ENCODE measurements at regions of chr7 and their contacts with region 1.

Region 1: GRCh38 chr7:31735991-31736982 is 49.3 kb downstream of the PPP1R17 start:
- DNase-seq: no peak
- H3K4me3 ChIP-seq: no peak overlapping the region
- H3K27ac ChIP-seq: no peak overlapping the region
- H3K4me1 ChIP-seq: no peaks in the 10 kb centered on the region
- H3K27me3 ChIP-seq: peaks cover 0 to 10% (median 0%) of the 10 kb centered on the region in 7 donors
- CTCF ChIP-seq: peak; percentile 60 to 88 (median 79)
- POLR2A ChIP-seq: no peak

Region 2: DNA sequence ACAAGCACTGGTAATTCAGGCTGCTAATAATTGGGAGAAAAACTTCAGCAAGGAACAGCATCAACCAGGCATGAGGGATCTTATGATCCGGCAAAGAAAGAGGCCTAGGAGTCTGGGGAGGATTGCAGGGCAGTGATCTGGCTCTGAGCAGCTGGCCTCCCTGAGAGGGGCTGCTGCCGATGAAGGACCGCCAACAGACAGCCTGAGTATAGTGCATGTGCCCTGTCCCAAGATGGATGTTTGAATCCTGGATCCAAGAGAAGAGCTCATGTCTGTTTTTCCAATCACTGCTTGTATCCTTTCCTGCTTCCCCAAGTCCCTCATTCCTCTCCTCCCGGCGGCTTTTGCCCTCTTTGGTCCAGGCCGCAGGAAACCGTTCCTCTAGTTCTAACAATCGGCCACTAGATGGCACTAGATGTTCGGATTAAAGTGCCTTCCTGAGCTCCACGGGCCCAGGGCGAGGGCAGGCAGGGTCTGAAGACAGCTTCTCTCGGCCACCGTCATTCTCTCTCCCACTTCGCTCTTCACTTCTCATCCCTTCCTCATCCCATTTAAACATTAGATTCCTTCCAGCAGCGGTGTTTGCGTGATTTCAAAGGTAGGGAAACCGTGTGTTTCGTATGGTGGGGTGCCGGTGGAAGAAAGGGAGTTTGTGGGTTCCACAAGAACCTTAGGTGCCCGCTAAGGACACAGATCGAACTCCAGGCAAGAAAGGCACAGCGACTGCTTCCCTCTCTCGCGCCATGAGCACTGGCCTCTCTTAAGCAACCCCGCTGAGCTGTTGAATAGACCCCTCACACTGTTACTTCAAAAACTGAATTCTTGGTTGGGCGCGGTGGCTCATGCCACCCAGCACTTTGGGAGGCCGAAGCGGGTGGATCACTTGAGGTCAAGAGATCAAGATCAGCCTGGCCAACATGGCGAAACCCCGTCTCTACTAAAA is 601.8 kb before region 1 on chr7:
- intact Hi-C with region 1: loop called (anchors 5 kb)
- DNase-seq: no peak
- H3K4me3 ChIP-seq: no peak overlapping the region
- H3K27ac ChIP-seq: peak overlapping the region in 2 of 8 donors; percentile 0 to 22
- H3K4me1 ChIP-seq: peaks cover 0 to 12% (median 0%) of the 10 kb centered on the region in 6 donors
- H3K27me3 ChIP-seq: peaks cover 0 to 6% (median 0%) of the 10 kb centered on the region in 7 donors
- CTCF ChIP-seq: peak; percentile 17 to 80 (median 60)
- POLR2A ChIP-seq: no peak

Region 3: DNA sequence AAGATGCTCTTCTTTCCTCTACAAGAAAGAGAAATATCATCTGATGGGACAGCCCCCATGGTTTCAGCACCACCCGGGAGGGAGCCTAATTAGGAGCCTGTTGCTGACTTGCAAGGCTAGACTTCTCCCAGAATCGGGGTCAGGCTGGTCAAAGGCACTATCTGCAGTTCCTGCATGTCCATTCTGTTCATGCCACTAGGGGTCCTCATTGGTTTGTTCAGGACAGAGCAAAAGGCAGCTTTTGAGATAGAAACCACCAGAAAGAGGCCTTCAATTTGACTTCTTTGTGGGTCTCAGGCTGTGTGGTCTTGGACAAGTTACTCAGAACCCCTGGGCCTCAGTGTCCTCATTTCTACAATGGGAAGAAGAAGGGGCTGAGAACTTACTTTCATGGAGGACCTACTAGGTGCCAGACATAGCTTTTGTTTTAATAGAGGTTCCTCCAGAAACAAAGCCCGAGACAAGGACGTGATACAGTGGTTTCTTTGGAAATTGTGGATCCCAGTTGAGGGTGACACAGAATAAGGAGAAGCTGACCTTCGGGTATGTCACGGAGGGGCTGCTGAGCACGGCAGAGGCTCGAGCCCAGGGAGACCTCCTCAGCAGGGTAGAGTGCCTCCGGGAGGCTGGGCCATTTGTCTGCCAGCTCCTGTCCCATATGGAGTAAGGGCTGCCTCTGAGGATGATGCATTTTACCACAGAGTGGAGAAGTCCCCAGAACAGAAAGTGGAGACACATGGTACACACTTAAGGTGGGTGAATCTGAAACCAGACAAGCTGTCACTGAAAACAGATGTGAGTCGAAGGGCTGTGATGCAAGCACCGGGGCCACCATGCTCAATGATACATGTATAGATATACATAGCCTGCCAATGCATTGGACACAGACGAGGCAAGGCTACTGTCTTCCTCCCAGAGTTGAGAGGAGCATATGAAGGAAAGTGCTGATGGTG is 362.7 kb before region 1 on chr7:
- intact Hi-C with region 1: no loop called
- DNase-seq: no peak
- H3K4me3 ChIP-seq: no peak overlapping the region
- H3K27ac ChIP-seq: no peak overlapping the region
- H3K4me1 ChIP-seq: no peaks in the 10 kb centered on the region
- H3K27me3 ChIP-seq: peaks cover 0 to 6% (median 0%) of the 10 kb centered on the region in 7 donors
- CTCF ChIP-seq: peak in 6 of 11 experiments; percentile 23 to 56 (median 34)
- POLR2A ChIP-seq: no peak

Region 4: GRCh38 chr7:31443457-31443856 is 292.8 kb before region 1 on chr7:
- intact Hi-C with region 1: loop called (anchors 5 kb)
- DNase-seq: no peak
- H3K4me3 ChIP-seq: no peak overlapping the region
- H3K27ac ChIP-seq: no peak overlapping the region
- H3K4me1 ChIP-seq: no peaks in the 10 kb centered on the region
- H3K27me3 ChIP-seq: no peaks in the 10 kb centered on the region
- CTCF ChIP-seq: peak in 10 of 11 experiments; percentile 24 to 76 (median 54)
- POLR2A ChIP-seq: no peak

Region 5: DNA sequence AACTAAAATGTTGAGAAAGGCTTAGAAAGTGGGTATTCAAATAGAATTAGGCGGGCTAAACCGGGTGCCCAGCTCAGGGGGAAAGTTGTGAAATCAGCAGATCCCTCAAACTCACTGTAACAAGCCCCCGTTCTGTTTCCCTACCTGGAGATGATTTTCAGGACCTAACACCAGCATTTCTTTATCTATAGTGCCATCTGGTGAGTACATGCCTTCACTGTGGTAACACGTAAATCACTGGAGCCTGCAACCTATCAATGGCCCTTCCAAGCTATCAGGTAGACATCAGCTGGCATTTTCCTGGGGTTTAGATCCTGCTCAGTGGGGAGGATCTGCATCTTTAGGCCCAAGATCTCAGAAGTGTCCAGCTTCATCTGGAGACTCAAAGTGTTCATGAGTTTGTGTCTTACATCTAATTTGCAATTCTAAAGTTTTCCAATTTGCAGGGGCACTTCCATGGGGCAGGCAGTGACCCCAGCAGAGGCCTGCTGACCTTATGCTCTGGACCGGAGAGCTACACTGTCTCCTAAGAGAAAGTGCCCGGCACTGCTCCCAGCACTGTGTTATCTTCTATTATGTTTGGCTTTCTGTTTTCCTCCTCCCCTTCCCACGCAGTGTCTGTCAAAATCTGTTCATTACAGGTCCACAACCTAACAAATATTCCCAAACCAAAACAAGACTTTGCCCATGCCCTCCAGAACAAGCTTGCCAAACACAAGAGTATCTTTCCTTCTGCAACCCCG is 621.4 kb after region 1 on chr7:
- intact Hi-C with region 1: loop called (anchors 10 kb)
- DNase-seq: no peak
- H3K4me3 ChIP-seq: no peak overlapping the region
- H3K27ac ChIP-seq: no peak overlapping the region
- H3K4me1 ChIP-seq: no peaks in the 10 kb centered on the region
- H3K27me3 ChIP-seq: peaks cover 0 to 10% (median 0%) of the 10 kb centered on the region in 7 donors
- CTCF ChIP-seq: no peak
- POLR2A ChIP-seq: no peak

Measured in spleen (tissue), 13 donors.